ENCODE measurements at regions of chr5 and their contacts with region 1.

Region 1: GRCh38 chr5:173050791-173051190 is 5.4 kb upstream of the CREBRF start:
- DNase-seq: no peak
- ATAC-seq: no peak
- H3K4me3 Mint-ChIP-seq: no peak overlapping the region
- H3K27ac Mint-ChIP-seq: no peak overlapping the region
- H3K4me1 Mint-ChIP-seq: peaks cover 26% of the 10 kb centered on the region
- H3K27me3 Mint-ChIP-seq: no peaks in the 10 kb centered on the region
- CTCF ChIP-seq: no peak

Region 2: DNA sequence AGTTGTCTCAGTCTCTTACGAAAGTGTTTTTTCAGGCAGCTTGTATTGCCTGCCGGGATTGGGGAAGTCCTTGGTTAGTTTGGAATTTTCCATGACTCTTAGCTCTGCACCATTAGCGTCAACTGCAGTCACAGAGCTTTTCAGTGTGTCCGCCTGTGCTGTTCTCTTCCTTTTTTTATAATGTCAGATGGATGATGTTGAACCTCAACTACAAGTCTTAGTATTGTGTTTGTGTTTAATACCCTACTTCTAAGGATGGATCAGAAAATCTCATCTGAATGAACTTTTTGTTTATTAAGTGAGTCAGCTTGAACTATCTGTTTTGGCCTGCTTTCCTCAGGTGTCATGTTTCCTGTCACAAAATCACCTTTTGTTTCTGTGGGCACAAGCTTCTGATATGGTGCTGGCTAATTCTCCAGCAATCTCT is 34.2 kb before region 1 on chr5:
- CTCF ChIA-PET with region 1: no interaction called
- POLR2A ChIA-PET with region 1: no interaction called
- intact Hi-C with region 1: no loop called
- DNase-seq: no peak
- ATAC-seq: peak; percentile 34
- H3K4me3 Mint-ChIP-seq: no peak overlapping the region
- H3K27ac Mint-ChIP-seq: peak overlapping the region; percentile 75
- H3K4me1 Mint-ChIP-seq: peaks cover 42% of the 10 kb centered on the region
- H3K27me3 Mint-ChIP-seq: no peaks in the 10 kb centered on the region
- CTCF ChIP-seq: no peak

Region 3: DNA sequence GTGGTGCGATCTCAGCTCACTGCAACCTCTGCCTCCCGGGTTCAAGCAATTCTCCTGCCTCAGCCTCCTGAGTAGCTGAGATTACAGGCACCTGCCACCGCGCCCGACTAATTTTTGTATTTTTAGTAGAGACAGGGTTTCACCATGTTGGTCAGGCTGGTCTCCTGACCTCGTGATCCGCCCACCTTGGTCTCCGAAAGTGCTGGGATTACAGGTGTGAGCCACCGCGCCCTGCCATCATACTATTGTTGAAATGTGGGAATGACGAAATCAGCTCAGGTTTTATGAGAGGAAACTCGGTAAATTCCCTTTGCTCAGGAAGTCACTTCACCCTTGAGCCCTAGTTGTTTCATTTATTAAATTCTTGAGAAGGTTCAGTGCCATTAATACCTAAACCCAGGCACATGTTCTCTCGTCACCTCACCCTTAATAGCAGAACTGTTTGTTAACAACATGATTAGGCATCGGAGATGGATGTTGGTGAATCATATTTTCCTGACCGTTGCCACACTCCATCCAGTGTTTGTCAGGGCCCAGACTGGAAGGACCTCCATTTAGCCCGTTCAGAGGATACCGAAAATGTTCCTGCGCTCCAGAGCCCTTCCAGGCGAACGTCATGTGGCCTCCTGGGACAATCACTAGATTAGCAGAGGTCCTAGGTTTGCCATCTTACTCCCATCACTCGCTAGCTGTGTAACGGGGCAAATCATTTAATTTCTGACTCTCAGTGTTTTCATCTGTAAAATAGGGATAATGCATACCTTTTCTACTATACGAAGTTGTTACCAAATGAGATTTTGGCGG is 14.7 kb before region 1 on chr5:
- CTCF ChIA-PET with region 1: interaction called, 5 read pairs
- POLR2A ChIA-PET with region 1: interaction called, 10 read pairs
- intact Hi-C with region 1: no loop called
- DNase-seq: peak; percentile 37
- ATAC-seq: no peak
- H3K4me3 Mint-ChIP-seq: peak overlapping the region; percentile 69
- H3K27ac Mint-ChIP-seq: peak overlapping the region; percentile 91
- H3K4me1 Mint-ChIP-seq: peaks cover 55% of the 10 kb centered on the region
- H3K27me3 Mint-ChIP-seq: no peaks in the 10 kb centered on the region
- CTCF ChIP-seq: no peak